Right ventricle myocardium inferior (tissue), 1 donor: ENCODE measurements at regions of chr3 and their contacts with region 1.

Region 1: DNA sequence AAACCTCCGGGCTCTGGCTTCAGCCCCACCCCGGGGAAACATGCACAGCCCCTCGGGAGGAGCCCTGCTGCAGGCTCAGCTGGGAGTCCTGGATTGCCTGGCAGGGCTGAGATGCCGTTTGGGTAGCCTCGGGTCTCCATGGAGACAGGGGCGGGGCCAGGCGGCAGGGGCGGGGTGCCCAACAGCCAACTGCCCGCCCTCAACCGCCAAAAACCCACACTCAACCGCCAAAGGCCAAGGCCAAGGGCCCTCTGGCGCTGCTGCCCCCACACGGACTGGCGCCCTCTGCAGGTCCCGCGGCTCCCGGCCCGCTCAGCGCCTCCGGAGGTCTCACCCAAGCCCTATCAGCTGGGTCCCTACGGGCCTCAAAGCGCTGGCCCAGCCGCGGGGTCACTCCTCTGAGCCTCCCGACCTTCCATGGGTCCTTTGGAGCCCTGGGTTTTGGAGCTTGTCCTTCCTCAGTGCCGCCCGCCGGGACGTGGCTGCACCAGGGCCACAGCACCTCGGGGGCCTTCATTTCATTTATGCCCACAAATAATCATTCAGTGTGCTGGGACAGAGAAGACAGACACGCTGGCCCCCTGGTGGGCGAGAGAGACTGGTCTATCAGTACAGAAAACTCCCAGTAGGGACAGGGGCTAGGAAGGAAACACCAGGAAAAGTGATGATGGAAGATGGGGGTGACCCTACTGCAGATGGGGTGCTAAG is 33.5 kb upstream of the ACAD9 start:
- DNase-seq: peak; percentile 93
- ATAC-seq: peak; percentile 94

Region 2: DNA sequence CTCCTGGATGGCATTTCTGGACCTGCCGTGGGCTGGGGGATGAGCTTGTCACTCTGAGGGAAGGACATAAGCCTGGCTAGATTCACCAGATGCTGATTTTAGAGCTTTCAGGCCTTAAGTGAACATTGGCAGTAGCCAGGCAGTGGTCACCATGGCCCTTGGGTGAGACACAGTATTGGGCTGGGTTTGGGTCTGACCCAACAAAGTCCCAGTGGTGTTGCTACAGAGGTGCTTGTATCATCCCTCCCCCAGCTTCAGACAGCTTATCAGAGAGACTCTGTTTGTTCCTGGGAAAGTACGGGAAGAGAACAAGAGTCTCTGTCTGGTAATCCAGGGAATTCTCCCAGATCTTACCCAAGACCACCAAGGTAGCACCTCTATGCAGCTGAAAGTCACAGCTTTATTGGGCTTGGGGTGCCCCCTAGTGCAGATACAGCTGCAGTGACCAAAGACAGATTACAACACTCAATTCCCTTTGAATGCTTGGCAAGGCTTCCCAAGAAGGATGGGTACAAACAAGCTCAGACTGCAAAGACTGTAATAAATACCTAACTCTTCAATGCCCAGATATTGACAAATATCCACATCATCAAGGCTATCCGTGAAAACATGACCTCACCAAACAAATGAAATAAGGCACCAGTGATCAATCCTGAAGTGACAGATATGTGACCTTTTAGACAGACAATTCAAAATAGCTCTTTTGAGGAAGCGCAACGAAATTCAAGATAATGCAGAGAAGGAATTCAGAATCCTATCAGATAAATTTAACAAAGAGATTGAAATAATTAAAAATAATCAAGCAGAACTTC is 712.5 kb before region 1 on chr3:
- intact Hi-C with region 1: no loop called
- DNase-seq: no peak
- ATAC-seq: peak; percentile 52

Region 3: DNA sequence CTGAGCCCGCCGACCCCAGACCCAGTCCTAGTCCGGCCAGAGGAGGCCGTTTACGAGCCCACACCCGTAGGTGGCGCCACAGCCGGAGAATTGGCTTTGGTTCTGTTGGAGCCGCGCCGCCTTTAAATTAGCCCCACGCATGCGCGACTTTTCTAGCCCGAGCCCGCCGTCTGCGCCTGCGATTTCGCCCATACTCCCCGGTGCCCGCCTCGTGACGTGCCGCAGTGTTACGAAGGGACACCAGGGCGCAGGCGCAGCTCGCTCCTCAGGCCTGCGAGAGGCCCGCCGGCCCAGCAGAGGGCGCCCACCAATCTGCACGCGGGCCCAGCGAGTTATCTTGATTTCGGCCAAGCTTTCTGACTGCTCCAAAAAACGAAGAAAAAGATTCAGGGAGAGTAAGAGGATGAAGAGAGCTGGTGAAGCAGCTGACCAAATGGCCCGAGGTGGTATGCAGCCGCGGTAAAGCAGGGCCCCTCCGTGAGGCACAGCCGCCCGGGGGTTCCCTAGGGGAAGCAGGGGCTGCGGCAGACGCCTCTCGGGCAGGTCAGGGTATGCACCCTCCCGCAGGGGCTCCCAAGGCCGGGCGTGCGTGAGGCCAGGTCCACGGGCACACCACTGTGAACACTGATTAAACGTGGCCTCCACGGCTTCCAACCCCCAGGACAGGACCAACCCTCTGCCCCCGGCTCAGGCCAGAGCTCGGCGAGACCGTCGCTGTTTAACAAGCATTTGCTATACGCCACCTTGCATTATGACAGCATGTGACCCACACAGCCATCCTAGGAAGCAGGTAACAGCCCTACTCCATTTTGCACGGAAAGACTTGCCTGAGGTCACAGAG is 228.2 kb before region 1 on chr3:
- intact Hi-C with region 1: loop called (anchors 5 kb)
- DNase-seq: peak; percentile 100
- ATAC-seq: peak; percentile 98

Region 4: DNA sequence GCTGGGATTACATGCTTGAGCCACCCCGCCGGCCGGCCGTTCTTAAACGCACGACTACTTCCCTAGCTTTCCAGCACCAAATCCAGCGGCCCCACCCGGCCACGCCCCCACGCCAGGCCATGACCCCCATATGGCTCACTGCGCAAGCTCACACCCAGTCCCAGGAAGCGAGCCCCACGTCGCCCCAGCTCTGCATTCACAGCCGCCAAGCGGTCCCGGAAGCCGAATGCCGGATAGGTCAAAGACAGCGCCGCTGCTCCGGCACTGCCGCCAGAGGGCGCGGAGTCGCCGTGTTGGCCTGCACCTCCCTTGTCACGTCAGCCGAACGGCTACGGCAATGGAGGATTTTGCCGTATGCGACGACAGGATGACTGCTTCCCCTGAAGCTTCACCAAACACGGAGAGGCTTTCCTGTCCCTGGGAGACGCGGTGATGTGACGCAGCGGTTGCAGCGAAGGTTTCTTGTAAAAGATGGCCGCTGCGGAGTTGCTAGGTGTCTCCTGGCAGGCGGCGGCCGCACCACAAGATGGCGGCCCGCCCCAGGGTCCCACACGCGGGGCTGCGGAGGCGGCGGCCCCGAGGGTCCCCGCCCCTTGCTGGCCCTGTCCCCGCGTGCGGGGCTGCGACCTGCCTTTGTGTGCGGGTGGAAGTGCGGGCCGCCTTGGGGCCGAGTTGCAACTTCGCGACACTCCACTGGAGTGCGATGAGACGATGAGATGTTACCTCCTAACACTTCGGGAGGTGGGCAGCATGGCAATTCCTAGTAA is 165.1 kb before region 1 on chr3:
- intact Hi-C with region 1: loop called (anchors 1 kb)
- DNase-seq: peak; percentile 100
- ATAC-seq: peak; percentile 100

Region 5: DNA sequence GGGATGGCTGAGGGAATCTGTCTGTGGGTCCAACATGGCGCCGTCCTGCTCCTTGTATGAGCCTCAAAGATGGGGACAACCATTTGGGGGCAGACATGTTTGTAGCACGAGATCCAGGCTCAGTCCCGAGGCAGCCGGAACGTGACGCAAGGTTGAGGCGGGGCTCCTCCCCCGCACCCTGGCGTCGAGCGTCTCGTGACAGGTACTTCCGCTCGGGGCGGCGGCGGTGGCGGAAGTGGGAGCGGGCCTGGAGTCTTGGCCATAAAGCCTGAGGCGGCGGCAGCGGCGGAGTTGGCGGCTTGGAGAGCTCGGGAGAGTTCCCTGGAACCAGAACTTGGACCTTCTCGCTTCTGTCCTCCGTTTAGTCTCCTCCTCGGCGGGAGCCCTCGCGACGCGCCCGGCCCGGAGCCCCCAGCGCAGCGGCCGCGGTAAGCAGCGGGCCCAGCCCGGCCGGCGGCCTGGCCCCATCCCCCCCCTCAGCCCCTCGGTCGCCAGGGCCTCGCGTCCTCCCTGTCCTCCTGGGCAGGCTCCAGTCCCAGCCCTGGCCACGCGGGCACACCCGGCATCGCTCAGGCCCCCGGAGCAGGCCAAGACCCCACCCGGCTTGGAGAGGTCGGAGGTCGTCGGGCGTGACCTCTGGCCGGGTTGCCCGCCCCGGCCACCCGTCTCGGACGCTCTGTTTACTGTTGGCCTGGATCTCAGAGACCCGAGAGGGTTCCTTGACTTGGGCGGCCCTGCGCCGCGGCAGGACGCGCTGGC is 119.8 kb before region 1 on chr3 and contains the start of gene RAB7A:
- intact Hi-C with region 1: loop called (anchors 5 kb)
- DNase-seq: peak; percentile 98
- ATAC-seq: peak; percentile 99
- total RNA-seq, gene RAB7A: 242 TPM

Region 6: GRCh38 chr3:128784232-128784631 is 61.7 kb before region 1 on chr3:
- intact Hi-C with region 1: loop called (anchors 2 kb)
- DNase-seq: peak; percentile 76
- ATAC-seq: peak; percentile 81

Region 7: DNA sequence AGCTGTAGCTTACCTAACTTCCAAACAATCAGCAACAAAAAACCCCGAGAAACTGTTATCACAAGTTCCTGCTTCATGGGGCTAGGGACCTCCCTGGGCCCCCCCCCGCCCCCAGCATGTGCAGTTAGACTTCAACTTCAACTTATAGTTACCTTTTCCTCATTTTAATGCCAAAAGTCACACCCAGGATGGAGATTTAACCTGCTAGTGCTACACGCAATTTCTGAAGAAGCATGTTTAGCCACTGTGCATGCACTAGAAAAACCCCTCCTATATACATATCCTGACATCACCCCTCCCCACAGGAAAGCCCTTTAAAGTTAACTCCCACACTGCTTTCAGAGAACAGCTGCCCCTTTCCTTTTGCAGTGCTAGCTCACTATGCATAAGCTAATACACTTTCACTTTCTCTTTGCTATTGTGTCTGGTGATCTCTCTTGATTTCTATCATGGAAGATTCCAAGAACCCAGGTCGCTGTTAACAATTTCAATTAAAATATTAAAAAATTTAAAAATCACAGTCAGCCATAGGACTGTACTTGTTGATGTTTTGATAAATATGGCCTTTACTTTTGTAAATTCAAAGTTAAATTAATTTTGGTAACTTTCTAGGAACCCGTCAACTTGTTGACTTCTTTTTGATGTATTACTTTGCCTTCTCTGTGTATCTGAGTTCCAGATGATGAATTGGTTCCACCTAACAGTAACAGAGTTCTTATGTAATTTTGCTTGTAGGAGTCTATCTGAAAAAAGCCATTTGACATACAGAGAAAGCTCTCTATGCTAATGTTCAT is 41.7 kb before region 1 on chr3:
- intact Hi-C with region 1: loop called (anchors 5 kb)
- DNase-seq: no peak
- ATAC-seq: no peak